Right ventricle myocardium superior (tissue), 1 donor: ENCODE measurements at regions of chr3 and their contacts with region 1.

Region 1: DNA sequence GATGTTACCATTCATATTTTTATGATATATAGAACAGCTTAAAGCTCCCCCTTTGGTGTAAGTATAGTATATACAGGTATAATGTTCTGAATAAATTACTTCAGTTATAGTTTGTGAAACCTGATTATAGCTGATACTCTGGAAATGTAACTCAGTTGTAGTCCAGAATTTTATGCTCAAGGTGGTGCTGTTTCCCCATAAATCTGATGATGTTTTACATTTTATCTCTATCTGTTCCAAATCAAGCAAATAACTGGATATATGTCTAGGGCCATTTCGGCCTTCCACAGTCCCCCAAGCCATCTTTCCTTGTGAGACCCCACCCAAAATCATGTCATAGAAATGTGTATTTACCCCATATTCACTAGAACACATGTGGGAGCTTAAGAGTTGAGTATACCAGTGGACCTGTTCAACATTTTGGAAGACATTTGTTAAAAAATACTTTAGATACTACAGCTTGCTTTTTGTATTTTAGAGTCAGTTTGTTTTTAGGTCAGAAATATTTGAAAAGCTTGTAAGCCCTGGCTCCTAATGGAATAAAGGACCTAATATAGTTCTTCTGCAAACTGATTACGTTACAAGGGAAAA is 107.1 kb downstream of the ATG7 start:
- DNase-seq: no peak
- ATAC-seq: peak; percentile 74

Region 2: DNA sequence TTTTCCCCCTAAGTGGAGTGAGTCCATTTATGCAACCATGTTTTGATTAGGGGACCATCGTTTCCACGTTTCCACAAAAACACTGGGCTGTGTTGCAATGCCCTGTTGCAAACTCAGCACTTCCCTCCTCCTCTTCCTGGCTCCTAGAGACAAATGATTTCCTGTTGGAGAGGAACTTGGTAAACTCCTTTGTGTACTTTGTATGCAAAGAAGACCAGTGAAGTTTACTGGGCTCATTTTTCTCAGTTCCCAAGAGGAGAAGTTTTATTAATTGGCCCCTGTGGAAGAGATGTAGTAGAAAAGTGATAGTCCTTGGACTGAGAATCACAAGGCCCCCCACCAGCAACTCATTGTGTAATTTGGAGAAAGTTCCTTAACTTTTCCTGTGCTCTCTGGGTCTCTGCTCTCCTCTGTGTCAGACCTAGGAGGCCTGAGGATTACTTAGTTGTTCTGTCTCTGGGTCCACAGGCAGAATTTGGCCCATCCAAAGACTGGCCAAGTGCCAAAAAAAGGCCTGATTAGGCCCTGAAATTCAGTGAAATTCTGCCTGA is 12.1 kb before region 1 on chr3:
- intact Hi-C with region 1: no loop called
- DNase-seq: peak; percentile 51
- ATAC-seq: peak; percentile 87

Region 3: GRCh38 chr3:11651900-11652299 is 272.6 kb after region 1 on chr3:
- intact Hi-C with region 1: loop called (anchors 2 kb)
- DNase-seq: no peak
- ATAC-seq: no peak

Region 4: GRCh38 chr3:11803977-11804892 is 424.9 kb after region 1 on chr3:
- intact Hi-C with region 1: loop called (anchors 5 kb)
- DNase-seq: peak; percentile 47
- ATAC-seq: peak; percentile 78